Activated CD8-positive, alpha-beta T cell treated with anti-CD3 and anti-CD28 coated beads for 36 hours (primary cell): ENCODE measurements at regions of chr1 and their contacts with region 1.

Region 1: GRCh38 chr1:156508163-156508887 is 7.8 kb upstream of the MEF2D start:
- DNase-seq: peak; percentile 57
- ATAC-seq: no peak
- H3K4me3 Mint-ChIP-seq: peak overlapping the region; percentile 75
- H3K27ac Mint-ChIP-seq: peak overlapping the region; percentile 84
- H3K4me1 Mint-ChIP-seq: peaks cover 56% of the 10 kb centered on the region
- H3K27me3 Mint-ChIP-seq: no peaks in the 10 kb centered on the region
- CTCF ChIP-seq: no peak

Region 2: GRCh38 chr1:156421062-156421938 is 87.0 kb before region 1 on chr1:
- CTCF ChIA-PET with region 1: no interaction called
- POLR2A ChIA-PET with region 1: no interaction called
- intact Hi-C with region 1: no loop called
- DNase-seq: peak; percentile 85
- ATAC-seq: peak; percentile 88
- H3K4me3 Mint-ChIP-seq: peak overlapping the region; percentile 72
- H3K27ac Mint-ChIP-seq: no peak overlapping the region
- H3K4me1 Mint-ChIP-seq: peaks cover 18% of the 10 kb centered on the region
- H3K27me3 Mint-ChIP-seq: peaks cover 71% of the 10 kb centered on the region
- CTCF ChIP-seq: no peak

Region 3: DNA sequence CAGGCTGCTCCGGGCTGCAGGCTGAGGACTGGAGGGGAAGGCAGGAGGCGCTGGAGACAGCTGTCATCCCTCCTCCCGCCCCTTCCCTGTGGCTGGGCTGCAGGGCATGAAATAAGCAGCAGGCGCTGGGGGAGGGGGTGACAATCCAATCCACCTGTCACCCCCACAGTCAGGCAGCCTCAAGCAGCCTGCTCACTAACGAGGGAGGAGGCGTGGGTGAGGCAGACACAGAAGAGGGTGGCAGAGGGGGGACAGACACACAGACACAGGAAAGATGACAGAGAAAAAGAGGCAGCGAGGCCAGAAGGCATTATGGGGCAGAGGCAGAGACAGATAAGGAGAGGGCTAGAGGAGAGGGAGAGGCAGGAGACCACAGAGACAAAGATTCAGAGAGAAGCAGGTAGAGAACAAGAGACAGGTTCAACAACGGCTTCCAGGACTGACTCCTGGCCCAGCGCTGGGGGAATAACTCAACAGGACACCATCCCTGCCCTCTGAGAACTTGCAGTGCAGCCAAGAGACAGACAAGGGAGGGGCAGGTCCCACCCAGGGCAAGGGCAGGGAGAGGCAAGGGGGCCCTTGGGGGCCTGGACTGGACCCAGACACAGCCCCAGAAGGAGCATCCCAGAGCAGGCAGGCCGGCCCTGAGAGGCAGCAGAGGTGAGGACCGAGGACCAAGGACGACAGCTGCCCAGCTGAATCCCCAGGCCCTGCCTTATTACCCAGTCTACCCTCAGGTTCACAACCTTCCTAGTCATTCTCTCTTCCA is 19.0 kb before region 1 on chr1:
- CTCF ChIA-PET with region 1: interaction called, 220 read pairs
- POLR2A ChIA-PET with region 1: interaction called, 245 read pairs
- intact Hi-C with region 1: no loop called
- DNase-seq: peak; percentile 80
- ATAC-seq: peak; percentile 48
- H3K4me3 Mint-ChIP-seq: peak overlapping the region; percentile 48
- H3K27ac Mint-ChIP-seq: peak overlapping the region; percentile 86
- H3K4me1 Mint-ChIP-seq: peaks cover 85% of the 10 kb centered on the region
- H3K27me3 Mint-ChIP-seq: no peaks in the 10 kb centered on the region
- CTCF ChIP-seq: no peak

Region 4: GRCh38 chr1:156524481-156524869 is 16.1 kb after region 1 on chr1:
- CTCF ChIA-PET with region 1: interaction called, 10 read pairs
- POLR2A ChIA-PET with region 1: interaction called, 11 read pairs
- intact Hi-C with region 1: no loop called
- DNase-seq: peak; percentile 70
- ATAC-seq: peak; percentile 93
- H3K4me3 Mint-ChIP-seq: peak overlapping the region; percentile 40
- H3K27ac Mint-ChIP-seq: peak overlapping the region; percentile 75
- H3K4me1 Mint-ChIP-seq: peaks cover 43% of the 10 kb centered on the region
- H3K27me3 Mint-ChIP-seq: no peaks in the 10 kb centered on the region
- CTCF ChIP-seq: no peak